Left cardiac atrium (tissue), 4 donors: ENCODE measurements at regions of chr5 and their contacts with region 1.

Region 1: GRCh38 chr5:73591102-73591695 is 25.7 kb downstream of the UTP15 start:
- DNase-seq: no peak
- ATAC-seq: peak; percentile 63 to 76

Region 2: GRCh38 chr5:73693481-73694061 is 102.4 kb after region 1 on chr5:
- intact Hi-C with region 1: loop called in 1 of 2 experiments (anchors 10 kb)
- DNase-seq: peak; percentile 21
- ATAC-seq: peak; percentile 24 to 38

Region 3: GRCh38 chr5:73792687-73793320 is 201.6 kb after region 1 on chr5:
- intact Hi-C with region 1: loop called (anchors 2 kb)
- DNase-seq: peak; percentile 73
- ATAC-seq: peak; percentile 81 to 82